ENCODE measurements at regions of chr15 and their contacts with region 1.

Region 1: GRCh38 chr15:89472785-89473256 is 23.6 kb downstream of the RHCG start:
- DNase-seq: peak; percentile 70
- H3K4me3 ChIP-seq: no peak overlapping the region
- H3K27ac ChIP-seq: no peak overlapping the region
- H3K4me1 ChIP-seq: no peaks in the 10 kb centered on the region
- CTCF ChIP-seq: peak; percentile 94

Region 2: GRCh38 chr15:89358755-89359439 is 113.9 kb before region 1 on chr15:
- CTCF ChIA-PET with region 1: interaction called, 5 read pairs
- POLR2A ChIA-PET with region 1: no interaction called
- intact Hi-C with region 1: loop called (anchors 1 kb)
- DNase-seq: peak; percentile 80
- H3K4me3 ChIP-seq: peak overlapping the region; percentile 67
- H3K27ac ChIP-seq: no peak overlapping the region
- H3K4me1 ChIP-seq: peaks cover 3% of the 10 kb centered on the region
- CTCF ChIP-seq: peak; percentile 97

Region 3: DNA sequence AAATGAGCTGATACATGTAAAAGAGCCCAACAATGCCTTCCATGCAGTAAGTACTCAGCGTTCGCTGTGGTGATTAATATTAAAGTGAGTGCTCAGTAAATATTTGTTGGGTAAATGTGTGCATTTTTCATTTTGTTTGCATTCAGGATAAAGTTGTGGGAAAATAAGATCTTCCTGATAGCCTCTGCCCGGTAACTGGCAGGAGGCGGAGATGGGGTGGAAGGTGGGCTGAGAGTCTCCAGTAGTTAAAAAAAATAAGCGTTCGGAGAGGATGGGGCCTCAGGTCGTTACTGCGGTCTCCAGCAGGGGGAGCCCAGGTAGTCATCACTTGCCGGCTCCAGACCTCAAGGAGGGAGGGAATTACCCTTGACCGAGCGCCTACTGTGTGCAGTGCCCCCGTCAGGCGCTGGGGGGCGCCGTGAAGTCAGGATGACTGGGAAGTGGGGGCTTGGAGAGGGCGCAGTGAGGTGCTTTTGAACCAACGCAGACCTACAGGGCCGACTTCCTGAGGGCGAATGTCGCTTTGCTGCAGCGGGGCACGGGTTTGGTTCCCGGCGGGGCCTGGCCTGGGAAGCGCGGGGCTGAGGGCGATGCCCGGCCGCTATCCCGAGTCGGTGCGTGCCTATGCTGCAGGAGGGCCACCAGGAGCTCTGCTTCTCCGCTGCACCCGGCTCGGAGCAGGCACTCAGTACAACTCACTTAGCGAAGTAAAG is 56.5 kb before region 1 on chr15:
- CTCF ChIA-PET with region 1: no interaction called
- POLR2A ChIA-PET with region 1: no interaction called
- intact Hi-C with region 1: loop called (anchors 1 kb)
- DNase-seq: peak; percentile 87
- H3K4me3 ChIP-seq: no peak overlapping the region
- H3K27ac ChIP-seq: no peak overlapping the region
- H3K4me1 ChIP-seq: no peaks in the 10 kb centered on the region
- CTCF ChIP-seq: peak; percentile 99

Region 4: DNA sequence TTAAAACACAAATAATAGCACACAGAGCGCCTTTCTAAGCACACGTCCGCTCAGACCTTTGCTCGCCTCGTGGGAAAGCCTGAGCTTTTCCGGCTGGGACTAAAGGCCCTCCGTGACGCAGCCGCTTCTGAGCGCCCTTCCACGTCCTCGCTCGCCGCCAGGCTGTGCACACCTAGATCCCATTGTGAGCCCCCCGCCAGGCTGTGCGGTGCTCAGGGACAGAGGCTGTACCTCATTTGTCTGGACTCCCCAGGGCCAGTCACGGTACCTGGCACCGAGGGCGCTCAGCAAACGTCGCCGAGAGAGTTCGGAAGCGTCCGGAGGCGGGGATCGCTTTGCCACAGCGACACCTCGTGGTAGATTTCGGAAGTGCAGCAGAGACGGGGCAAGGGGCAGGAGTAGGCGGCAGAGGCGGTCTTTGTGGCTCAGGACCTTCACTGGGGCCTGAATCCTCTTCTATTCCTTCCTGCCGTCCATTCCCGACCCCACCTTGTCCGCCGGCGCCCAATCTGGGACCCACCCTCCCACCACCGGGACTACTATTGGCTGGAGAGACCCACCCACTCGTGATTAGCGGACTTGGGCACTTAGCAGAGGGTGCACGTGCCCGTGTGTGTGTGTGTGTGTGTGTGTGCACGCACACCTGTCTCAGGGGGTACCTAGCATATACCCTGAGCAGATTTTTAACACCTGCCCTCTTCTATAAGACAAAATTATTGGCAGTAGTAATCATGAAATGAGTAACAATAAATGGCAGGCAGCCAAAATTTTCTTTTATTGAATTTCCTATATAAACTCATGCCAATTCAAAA is 42.1 kb before region 1 on chr15:
- CTCF ChIA-PET with region 1: no interaction called
- POLR2A ChIA-PET with region 1: no interaction called
- intact Hi-C with region 1: loop called (anchors 5 kb)
- DNase-seq: peak; percentile 81
- H3K4me3 ChIP-seq: peak overlapping the region; percentile 64
- H3K27ac ChIP-seq: no peak overlapping the region
- H3K4me1 ChIP-seq: peaks cover 11% of the 10 kb centered on the region
- CTCF ChIP-seq: peak; percentile 89

Region 5: DNA sequence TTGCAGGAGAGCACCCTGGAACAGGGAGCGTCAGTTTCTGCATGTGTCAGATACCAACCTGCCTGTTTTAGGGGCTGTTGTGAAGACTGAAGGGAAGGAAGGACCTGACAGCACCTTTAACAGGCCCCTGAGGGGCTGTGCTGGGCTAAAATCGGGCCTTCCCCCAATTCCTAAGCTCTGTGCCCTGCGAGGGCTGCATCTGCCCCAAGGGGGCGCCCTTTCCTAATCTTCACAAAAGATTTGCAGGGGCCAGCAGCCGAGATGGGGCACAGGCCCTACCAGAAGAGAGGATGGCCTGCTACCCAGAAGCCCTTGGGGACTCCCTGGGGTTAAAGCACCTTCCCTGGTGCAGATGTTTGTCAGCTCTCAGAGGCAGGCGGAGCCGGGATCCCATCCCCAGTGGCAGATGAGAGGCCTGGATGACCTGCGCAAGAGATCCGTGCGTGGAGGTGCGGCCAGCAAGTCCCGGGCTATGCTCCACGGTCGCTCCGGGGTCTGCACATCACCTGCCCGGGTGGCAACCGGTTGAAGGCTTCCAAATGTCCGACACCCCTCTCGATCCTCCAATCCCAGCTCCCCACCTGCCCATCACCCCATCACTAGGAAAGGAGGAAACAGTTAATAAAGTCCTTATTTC is 30.0 kb before region 1 on chr15:
- CTCF ChIA-PET with region 1: interaction called, 5 read pairs
- POLR2A ChIA-PET with region 1: interaction called, 5 read pairs
- intact Hi-C with region 1: loop called (anchors 1 kb)
- DNase-seq: peak; percentile 82
- H3K4me3 ChIP-seq: no peak overlapping the region
- H3K27ac ChIP-seq: peak overlapping the region; percentile 83
- H3K4me1 ChIP-seq: peaks cover 44% of the 10 kb centered on the region
- CTCF ChIP-seq: peak; percentile 93

Region 6: DNA sequence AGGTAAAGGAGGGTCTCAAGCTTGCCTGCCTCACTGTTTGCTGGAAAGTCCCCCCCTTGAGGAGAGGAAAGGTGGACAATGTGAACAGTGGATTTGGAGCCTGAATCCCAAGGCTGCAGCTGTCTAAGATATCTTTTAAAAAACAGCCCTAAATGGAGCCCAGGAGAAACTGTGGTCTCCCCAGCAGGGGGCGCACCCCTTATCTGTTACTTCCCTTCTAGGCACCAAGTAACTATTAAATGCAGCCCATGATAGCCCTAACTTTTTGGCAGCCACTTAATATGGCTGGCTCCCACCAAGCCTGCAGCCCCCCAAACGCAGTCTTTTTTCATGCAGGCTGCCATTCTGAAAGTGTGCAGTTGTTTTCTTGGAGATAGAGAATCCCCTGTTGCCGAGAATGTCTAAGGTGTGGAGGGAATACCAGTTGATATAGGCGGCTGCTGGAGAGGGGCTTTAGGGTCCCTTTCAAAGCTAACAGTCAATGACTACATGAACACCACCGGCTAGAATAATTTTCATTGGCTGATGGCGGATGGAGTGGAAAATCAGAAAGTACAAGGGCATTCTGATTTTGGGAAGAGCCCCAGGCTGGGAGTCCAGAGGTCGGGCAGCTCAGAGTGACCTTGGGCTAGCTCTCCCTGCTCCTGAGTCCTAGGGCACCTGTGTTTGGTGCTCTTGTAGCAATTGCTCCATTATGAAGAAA is 22.3 kb after region 1 on chr15:
- CTCF ChIA-PET with region 1: no interaction called
- POLR2A ChIA-PET with region 1: no interaction called
- intact Hi-C with region 1: no loop called
- DNase-seq: peak; percentile 23
- H3K4me3 ChIP-seq: no peak overlapping the region
- H3K27ac ChIP-seq: no peak overlapping the region
- H3K4me1 ChIP-seq: no peaks in the 10 kb centered on the region
- CTCF ChIP-seq: peak; percentile 75

Measured in OCI-LY7 (cell line).